ENCODE measurements at regions of chr2 and their contacts with region 1.

Region 1: DNA sequence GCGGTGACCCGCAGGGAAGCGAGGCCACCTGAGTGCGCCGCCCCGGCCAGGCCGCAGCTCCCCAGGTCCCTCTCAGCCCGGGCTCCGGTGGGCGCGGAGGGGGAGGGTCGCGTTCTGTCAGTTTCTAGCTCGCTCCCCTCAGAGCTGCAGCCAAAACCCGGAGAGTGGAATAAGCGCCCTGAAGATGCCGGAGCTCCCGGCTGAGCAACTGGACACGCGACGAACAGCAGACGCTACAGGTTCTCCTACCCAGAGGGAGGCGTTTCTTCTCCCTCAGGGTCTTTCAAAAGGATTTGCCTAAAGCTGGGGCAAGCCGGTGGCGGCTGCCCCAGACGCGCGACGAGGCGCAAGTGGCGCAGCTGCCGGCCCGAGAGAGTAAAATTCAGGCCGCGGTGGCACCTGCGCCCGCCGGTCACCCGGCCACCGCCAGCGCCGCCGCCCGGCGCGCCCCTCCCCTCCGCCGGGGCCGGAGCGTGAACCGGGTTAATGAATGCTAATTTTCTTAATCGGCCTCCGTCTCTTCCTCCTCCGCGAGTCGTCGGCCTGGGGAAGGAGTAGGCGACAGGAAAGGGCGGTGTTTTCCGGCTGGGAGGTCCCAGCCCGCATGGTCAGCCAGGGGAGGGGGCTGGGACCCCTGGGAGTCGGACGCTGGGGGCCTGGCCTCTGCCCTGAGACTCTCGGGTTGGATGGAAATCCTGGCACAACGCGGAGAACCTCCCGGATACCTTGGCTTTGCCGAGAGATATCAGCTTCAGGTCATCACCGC is 845 bp upstream of the CDC42EP3 start:
- DNase-seq: peak; percentile 94 to 95
- H3K4me3 ChIP-seq: peak overlapping the region; percentile 98
- H3K4me3 Mint-ChIP-seq: peak overlapping the region; percentile 73
- H3K27ac Mint-ChIP-seq: peak overlapping the region; percentile 20
- H3K4me1 ChIP-seq: peaks cover 47% of the 10 kb centered on the region
- H3K4me1 Mint-ChIP-seq: peaks cover 40% of the 10 kb centered on the region
- H3K27me3 ChIP-seq: no peaks in the 10 kb centered on the region
- H3K27me3 Mint-ChIP-seq: no peaks in the 10 kb centered on the region
- CTCF ChIP-seq: no peak

Region 2: DNA sequence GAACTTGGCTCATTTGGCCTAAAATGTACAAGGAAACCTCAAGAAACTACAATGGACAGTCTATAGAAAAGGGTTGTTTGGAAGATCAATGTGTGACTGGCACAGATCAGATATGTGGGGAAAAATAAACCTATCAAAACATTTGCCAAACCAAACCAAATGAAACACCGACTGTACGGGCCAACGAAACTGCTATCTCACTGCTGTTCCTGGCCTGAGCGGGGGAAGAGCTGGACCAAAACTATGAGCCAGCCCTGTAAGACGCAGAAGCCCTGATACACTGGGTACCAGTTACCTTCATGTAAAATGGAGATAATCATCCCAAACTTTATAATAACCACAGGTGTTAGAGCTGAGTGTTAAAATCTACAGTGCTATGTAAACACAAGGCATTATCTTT is 12.6 kb before region 1 on chr2:
- CTCF ChIA-PET with region 1: no interaction called
- POLR2A ChIA-PET with region 1: no interaction called
- intact Hi-C with region 1: loop called (anchors 1 kb)
- DNase-seq: no peak
- H3K4me3 ChIP-seq: no peak overlapping the region
- H3K4me3 Mint-ChIP-seq: peak overlapping the region; percentile 47
- H3K27ac Mint-ChIP-seq: peak overlapping the region; percentile 35
- H3K4me1 ChIP-seq: peaks cover 66% of the 10 kb centered on the region
- H3K4me1 Mint-ChIP-seq: peaks cover 60% of the 10 kb centered on the region
- H3K27me3 ChIP-seq: no peaks in the 10 kb centered on the region
- H3K27me3 Mint-ChIP-seq: no peaks in the 10 kb centered on the region
- CTCF ChIP-seq: no peak

Region 3: DNA sequence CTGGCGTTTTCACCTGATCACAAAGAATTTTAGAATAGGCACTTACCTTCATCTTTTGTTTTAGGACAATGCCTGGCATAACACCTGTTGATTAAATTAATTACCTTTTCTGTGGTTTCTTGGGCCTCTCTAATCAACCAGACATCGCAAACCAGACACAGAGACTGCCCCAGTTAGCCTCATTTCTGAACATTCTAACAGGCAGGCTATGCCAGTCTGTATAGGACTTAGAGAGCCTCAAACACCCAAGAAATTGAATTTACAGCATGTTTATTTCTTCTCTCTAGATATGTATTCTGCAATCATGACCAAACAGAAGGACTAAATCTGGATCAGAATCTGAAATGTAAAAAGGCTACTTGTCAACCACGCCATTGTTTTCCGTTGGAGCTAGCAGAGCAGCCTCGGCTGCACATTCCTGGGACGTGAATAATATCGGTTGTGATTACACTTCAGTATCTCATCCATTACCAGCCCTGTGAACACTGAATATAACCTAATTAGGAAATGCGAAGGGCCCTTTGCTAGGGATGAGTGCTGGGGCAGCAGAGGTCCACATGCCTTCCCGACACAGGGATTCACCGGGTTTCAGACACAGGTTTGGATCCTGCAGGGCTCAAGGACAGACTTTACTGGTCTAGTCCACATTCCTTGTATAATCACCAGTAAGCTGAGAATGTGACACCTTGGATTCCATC is 16.6 kb after region 1 on chr2:
- CTCF ChIA-PET with region 1: interaction called, 6 read pairs
- POLR2A ChIA-PET with region 1: interaction called, 4 read pairs
- intact Hi-C with region 1: loop called (anchors 2 kb)
- DNase-seq: peak; percentile 74 to 82
- H3K4me3 ChIP-seq: no peak overlapping the region
- H3K4me3 Mint-ChIP-seq: peak overlapping the region; percentile 36
- H3K27ac Mint-ChIP-seq: peak overlapping the region; percentile 70
- H3K4me1 ChIP-seq: peaks cover 26% of the 10 kb centered on the region
- H3K4me1 Mint-ChIP-seq: peaks cover 31% of the 10 kb centered on the region
- H3K27me3 ChIP-seq: no peaks in the 10 kb centered on the region
- H3K27me3 Mint-ChIP-seq: no peaks in the 10 kb centered on the region
- CTCF ChIP-seq: no peak

Region 4: DNA sequence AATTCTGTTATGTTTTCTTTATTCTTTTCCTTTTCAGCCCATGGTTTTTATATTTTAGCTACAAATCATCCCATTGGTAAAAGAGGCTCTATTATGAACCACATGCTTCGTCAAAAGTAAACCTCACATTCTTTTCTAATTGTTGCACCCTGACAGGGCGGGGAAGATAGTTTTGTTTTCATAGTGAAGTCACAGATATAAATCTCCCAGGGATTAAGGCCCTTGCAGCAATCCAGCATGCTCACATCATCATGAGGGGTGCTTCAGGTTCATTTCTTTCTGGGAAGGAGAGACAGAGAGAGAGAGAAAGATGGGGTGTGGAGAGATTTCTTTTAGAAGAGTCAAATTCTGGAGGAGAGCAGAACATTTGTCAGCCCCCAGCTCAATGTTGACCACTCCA is 123.7 kb after region 1 on chr2:
- CTCF ChIA-PET with region 1: no interaction called
- POLR2A ChIA-PET with region 1: no interaction called
- intact Hi-C with region 1: no loop called
- DNase-seq: peak in 1 of 2 experiments; percentile 53
- H3K4me3 ChIP-seq: no peak overlapping the region
- H3K4me3 Mint-ChIP-seq: peak overlapping the region; percentile 30
- H3K27ac Mint-ChIP-seq: peak overlapping the region; percentile 82
- H3K4me1 ChIP-seq: peaks cover 57% of the 10 kb centered on the region
- H3K4me1 Mint-ChIP-seq: peaks cover 59% of the 10 kb centered on the region
- H3K27me3 ChIP-seq: no peaks in the 10 kb centered on the region
- H3K27me3 Mint-ChIP-seq: no peaks in the 10 kb centered on the region
- CTCF ChIP-seq: no peak

Measured in Caco-2 (cell line).